ENCODE measurements at regions of chr1 and their contacts with region 1.

Region 1: GRCh38 chr1:15370781-15371520 is 38.7 kb upstream of the EFHD2 start:
- DNase-seq: no peak
- ATAC-seq: peak; percentile 81

Region 2: GRCh38 chr1:15328351-15329103 is 42.4 kb before region 1 on chr1:
- intact Hi-C with region 1: loop called (anchors 5 kb)
- DNase-seq: peak; percentile 85
- ATAC-seq: peak; percentile 90

Region 3: GRCh38 chr1:15355968-15356621 is 14.9 kb before region 1 on chr1:
- intact Hi-C with region 1: no loop called
- DNase-seq: no peak
- ATAC-seq: no peak

Measured in Right ventricle myocardium inferior (tissue), 1 donor.